ENCODE measurements at regions of chr22 and their contacts with region 1.

Region 1: DNA sequence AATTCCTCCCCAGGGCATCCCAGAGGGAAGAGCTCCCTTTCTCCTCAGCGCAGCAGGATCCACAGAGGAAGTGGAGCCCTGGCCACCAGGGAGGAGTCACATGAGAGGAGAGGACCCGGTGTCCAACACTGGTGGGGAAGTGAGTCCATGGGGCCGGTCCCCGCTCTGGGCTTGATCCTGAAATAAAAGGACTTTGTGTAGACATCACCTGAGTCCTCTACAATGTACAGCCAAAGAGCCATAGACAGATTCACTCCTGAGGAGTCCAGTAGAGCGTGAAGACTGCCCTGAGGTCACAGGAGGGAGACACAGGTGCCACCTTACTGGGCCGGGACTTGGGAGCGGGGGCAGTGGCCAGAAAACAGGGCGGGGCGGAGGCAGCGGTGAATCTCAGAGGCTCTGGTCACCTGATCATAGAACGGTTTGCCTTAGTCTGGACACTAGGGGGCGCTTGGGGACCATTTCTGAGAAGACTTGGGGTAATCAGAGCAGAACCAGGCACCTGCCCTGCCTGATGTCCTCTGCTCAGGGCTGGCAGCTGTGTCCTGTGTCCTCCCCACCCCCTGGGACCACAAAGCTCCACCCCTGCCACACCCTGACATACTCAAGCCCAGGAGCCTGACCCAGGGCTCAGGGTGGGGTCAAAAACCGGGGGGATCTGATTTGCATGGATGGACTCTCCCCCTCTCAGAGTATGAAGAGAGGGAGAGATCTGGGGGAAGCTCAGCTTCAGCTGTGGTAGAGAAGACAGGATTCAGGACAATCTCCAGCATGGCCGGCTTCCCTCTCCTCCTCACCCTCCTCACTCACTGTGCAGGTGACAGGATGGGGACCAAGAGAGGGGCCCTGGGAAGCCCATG is 112.7 kb downstream of the VPREB1 start:
- DNase-seq: peak; percentile 41 to 94
- H3K4me3 ChIP-seq: peak overlapping the region in 1 of 4 experiments; percentile 5; a peak in 1 of 8 replicates
- H3K27ac ChIP-seq: no peak overlapping the region
- H3K4me1 ChIP-seq: peaks cover 0 to 3% (median 0%) of the 10 kb centered on the region in 4 experiments; a peak in 2 of 7 replicates
- H3K27me3 ChIP-seq: peaks cover 62 to 98% (median 88%) of the 10 kb centered on the region in 4 experiments
- CTCF ChIP-seq: peak; percentile 76 to 87 (median 76)
- EP300 ChIP-seq: no peak
- POLR2A ChIP-seq: no peak
- RAD21 ChIP-seq: peak; percentile 68 to 76

Region 2: DNA sequence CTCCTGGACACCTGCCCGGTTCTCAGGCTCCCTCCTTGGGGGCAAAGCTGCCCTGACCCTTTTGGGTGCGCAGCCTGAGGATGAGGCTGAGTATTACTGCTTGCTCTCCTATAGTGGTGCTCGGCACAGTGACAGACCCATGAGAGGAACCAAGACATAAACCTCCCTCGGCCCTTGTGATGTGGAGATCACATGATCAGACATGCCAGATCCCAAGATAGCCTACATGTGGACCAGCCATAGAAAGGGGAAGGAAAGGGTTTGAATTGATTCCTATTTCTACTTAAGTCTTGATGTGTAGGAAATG is 12.7 kb after region 1 on chr22:
- CTCF ChIA-PET with region 1: interaction called, 19 read pairs
- POLR2A ChIA-PET with region 1: no interaction called
- DNase-seq: no peak
- H3K4me3 ChIP-seq: no peak overlapping the region
- H3K27ac ChIP-seq: no peak overlapping the region
- H3K4me1 ChIP-seq: no peaks in the 10 kb centered on the region
- H3K27me3 ChIP-seq: peaks cover 78 to 100% (median 98%) of the 10 kb centered on the region in 4 experiments
- CTCF ChIP-seq: no peak
- EP300 ChIP-seq: no peak
- POLR2A ChIP-seq: no peak
- RAD21 ChIP-seq: no peak

Region 3: GRCh38 chr22:22410121-22410520 is 52.9 kb after region 1 on chr22:
- CTCF ChIA-PET with region 1: no interaction called
- POLR2A ChIA-PET with region 1: no interaction called
- DNase-seq: no peak
- H3K4me3 ChIP-seq: no peak overlapping the region
- H3K27ac ChIP-seq: no peak overlapping the region
- H3K4me1 ChIP-seq: no peaks in the 10 kb centered on the region
- H3K27me3 ChIP-seq: peaks cover 67 to 99% (median 95%) of the 10 kb centered on the region in 4 experiments
- CTCF ChIP-seq: no peak
- EP300 ChIP-seq: no peak
- POLR2A ChIP-seq: no peak
- RAD21 ChIP-seq: no peak

Region 4: GRCh38 chr22:22458387-22458786 is 101.1 kb after region 1 on chr22:
- CTCF ChIA-PET with region 1: interaction called, 10 read pairs
- POLR2A ChIA-PET with region 1: no interaction called
- DNase-seq: no peak
- H3K4me3 ChIP-seq: no peak overlapping the region
- H3K27ac ChIP-seq: no peak overlapping the region
- H3K4me1 ChIP-seq: peaks cover 0 to 14% (median 3%) of the 10 kb centered on the region in 4 experiments; a peak in 3 of 7 replicates
- H3K27me3 ChIP-seq: peaks cover 7 to 54% (median 36%) of the 10 kb centered on the region in 4 experiments
- CTCF ChIP-seq: no peak
- EP300 ChIP-seq: no peak
- POLR2A ChIP-seq: no peak
- RAD21 ChIP-seq: no peak

Measured in H1 (cell line).